ENCODE measurements at regions of chr5 and their contacts with region 1.

Region 1: GRCh38 chr5:81851481-81852178 is 100.7 kb upstream of the SSBP2 start:
- DNase-seq: peak; percentile 93
- H3K4me3 Mint-ChIP-seq: peak overlapping the region; percentile 88
- H3K27ac Mint-ChIP-seq: peak overlapping the region; percentile 95
- H3K4me1 Mint-ChIP-seq: peaks cover 47% of the 10 kb centered on the region
- H3K27me3 Mint-ChIP-seq: no peaks in the 10 kb centered on the region

Region 2: GRCh38 chr5:81751009-81751835 is 100.4 kb before region 1 on chr5 and contains the start of gene SSBP2:
- CTCF ChIA-PET with region 1: interaction called, 11 read pairs
- POLR2A ChIA-PET with region 1: interaction called, 37 read pairs
- DNase-seq: peak; percentile 99
- H3K4me3 Mint-ChIP-seq: peak within 1 kb of the TSS; percentile 95
- H3K27ac Mint-ChIP-seq: peak within 1 kb of the TSS; percentile 97
- H3K4me1 Mint-ChIP-seq: peaks cover 36% of the 10 kb centered on the region
- H3K27me3 Mint-ChIP-seq: peaks cover 7% of the 10 kb centered on the region
- total RNA-seq, gene SSBP2: 48.2 to 50.6 TPM

Region 3: DNA sequence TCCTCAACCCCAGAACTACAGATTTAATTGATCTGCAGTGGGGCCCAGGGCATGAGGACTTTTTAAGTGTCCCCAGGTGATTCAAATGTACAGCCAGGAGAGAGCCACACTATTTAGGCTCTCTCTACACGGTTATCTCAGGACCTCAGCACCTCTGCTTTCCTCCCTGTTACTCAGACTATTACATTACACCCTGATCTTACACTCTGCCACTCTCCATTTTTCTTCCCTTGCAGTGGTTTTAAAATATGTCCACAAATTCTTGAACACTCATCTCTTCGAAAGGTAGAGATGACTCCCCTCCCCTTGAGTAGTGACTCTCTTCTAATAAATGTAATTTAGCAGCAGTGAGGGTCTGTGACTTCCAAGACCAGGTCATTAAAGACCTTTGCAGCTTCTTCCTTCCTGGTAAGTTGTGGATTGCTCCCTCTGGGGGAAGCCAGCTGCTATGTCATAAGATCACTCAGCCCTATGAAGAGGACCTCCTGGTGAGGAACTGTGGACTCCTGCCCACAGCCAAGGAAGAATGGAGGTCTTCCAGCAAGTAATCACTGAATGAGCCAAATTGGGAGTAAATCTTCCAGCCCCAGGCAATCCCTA is 13.2 kb before region 1 on chr5:
- CTCF ChIA-PET with region 1: interaction called, 19 read pairs
- POLR2A ChIA-PET with region 1: no interaction called
- DNase-seq: peak; percentile 36
- H3K4me3 Mint-ChIP-seq: no peak overlapping the region
- H3K27ac Mint-ChIP-seq: no peak overlapping the region
- H3K4me1 Mint-ChIP-seq: peaks cover 9% of the 10 kb centered on the region
- H3K27me3 Mint-ChIP-seq: no peaks in the 10 kb centered on the region